ENCODE measurements at regions of chr3 and their contacts with region 1.

Region 1: GRCh38 chr3:191094057-191094845 is 104.8 kb upstream of the OSTN start:
- DNase-seq: no peak
- ATAC-seq: no peak
- H3K4me3 ChIP-seq: no peak overlapping the region
- H3K27ac ChIP-seq: no peak overlapping the region
- H3K4me1 ChIP-seq: no peaks in the 10 kb centered on the region
- H3K27me3 ChIP-seq: no peaks in the 10 kb centered on the region
- CTCF ChIP-seq: no peak
- POLR2A ChIP-seq: no peak
- RAD21 ChIP-seq: no peak

Region 2: DNA sequence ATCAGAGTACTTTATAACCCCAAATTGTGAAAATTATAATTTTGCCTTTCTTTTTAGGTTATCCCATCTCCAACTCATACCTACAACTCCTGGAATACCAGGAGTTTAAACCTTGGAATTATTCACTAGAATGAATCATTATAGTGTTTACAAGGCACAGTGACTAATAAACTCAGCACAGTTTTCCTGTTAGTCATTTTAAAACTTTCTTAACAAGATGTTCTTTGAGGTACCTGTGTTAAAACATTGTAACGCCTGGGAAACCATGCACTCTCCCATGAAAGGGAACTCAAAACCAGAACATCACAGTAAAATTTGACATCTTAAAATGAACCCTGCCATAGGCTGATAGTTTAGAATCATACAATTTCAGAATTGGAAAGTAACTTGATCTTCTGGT is 27.6 kb before region 1 on chr3:
- CTCF ChIA-PET with region 1: no interaction called
- POLR2A ChIA-PET with region 1: no interaction called
- RAD21 ChIA-PET with region 1: no interaction called
- intact Hi-C with region 1: no loop called
- DNase-seq: no peak
- ATAC-seq: no peak
- H3K4me3 ChIP-seq: no peak overlapping the region
- H3K27ac ChIP-seq: no peak overlapping the region
- H3K4me1 ChIP-seq: peaks cover 0 to 9% of the 10 kb centered on the region in 2 experiments; a peak in 1 of 4 replicates
- H3K27me3 ChIP-seq: no peaks in the 10 kb centered on the region
- CTCF ChIP-seq: no peak
- POLR2A ChIP-seq: no peak
- RAD21 ChIP-seq: no peak

Region 3: GRCh38 chr3:191119415-191120295 is 25.4 kb after region 1 on chr3:
- CTCF ChIA-PET with region 1: no interaction called
- POLR2A ChIA-PET with region 1: no interaction called
- RAD21 ChIA-PET with region 1: no interaction called
- intact Hi-C with region 1: loop called (anchors 1 kb)
- DNase-seq: no peak
- ATAC-seq: no peak
- H3K4me3 ChIP-seq: no peak overlapping the region
- H3K27ac ChIP-seq: no peak overlapping the region
- H3K4me1 ChIP-seq: no peaks in the 10 kb centered on the region
- H3K27me3 ChIP-seq: no peaks in the 10 kb centered on the region
- CTCF ChIP-seq: no peak
- POLR2A ChIP-seq: no peak
- RAD21 ChIP-seq: no peak

Region 4: DNA sequence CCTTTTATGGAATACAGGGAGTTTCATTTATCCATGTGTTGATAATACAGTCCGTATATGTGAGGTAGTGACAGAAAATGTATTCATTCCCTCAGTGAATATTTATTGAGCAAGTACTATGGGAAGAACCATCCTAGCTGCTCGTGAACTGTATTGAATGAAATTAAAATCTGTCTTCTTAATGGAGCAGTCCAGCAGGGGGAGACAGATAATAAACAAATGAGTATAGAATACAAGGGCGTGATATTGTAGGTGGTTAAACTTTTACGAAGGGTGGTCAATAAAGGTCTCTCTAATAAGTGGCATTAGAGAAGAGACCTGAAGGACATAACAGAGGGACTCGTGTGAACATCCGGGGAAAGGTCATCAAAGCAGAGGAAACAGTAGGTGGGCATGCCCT is 42.1 kb after region 1 on chr3:
- CTCF ChIA-PET with region 1: no interaction called
- POLR2A ChIA-PET with region 1: no interaction called
- RAD21 ChIA-PET with region 1: no interaction called
- intact Hi-C with region 1: no loop called
- DNase-seq: peak; percentile 23
- ATAC-seq: peak; percentile 83
- H3K4me3 ChIP-seq: no peak overlapping the region
- H3K27ac ChIP-seq: no peak overlapping the region
- H3K4me1 ChIP-seq: peaks cover under 1 to 6% of the 10 kb centered on the region in 2 experiments; a peak in 3 of 4 replicates
- H3K27me3 ChIP-seq: no peaks in the 10 kb centered on the region
- CTCF ChIP-seq: peak; percentile 42 to 67 (median 54); a peak in 4 of 6 replicates
- POLR2A ChIP-seq: no peak
- RAD21 ChIP-seq: peak; percentile 76